ENCODE measurements at regions of chr2 and their contacts with region 1.

Region 1: DNA sequence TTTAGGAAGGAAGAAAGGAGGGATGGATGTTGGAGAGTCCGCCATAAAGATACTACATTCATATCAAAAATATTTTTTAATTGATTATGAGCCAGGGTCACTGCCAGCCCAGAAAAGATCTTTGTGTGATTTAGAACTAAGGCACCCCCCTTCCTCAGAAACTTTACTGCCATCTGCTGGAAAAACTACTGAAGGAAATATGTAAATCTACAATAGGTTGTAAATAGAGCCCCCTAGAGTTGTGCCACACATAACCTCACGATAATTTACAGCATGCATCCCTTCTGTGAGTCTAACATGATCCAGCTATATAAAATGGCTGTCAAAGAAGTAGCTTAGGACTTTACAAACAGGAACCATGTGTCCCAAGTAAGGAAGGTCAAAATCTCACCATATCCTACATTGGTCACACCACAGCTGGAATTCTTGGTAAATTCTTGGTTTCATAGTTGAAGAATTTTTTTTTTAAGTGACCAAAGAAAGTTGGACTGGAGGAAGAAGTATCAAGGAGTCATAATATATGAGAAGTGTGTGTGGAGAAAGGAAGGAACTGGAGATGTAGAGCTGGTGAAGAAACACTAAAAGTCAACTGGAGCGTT is 152.5 kb downstream of the CYP26B1 start:
- DNase-seq: no peak
- H3K4me3 ChIP-seq: no peak overlapping the region
- H3K27me3 ChIP-seq: peaks cover 5% of the 10 kb centered on the region
- CTCF ChIP-seq: peak; percentile 60

Region 2: DNA sequence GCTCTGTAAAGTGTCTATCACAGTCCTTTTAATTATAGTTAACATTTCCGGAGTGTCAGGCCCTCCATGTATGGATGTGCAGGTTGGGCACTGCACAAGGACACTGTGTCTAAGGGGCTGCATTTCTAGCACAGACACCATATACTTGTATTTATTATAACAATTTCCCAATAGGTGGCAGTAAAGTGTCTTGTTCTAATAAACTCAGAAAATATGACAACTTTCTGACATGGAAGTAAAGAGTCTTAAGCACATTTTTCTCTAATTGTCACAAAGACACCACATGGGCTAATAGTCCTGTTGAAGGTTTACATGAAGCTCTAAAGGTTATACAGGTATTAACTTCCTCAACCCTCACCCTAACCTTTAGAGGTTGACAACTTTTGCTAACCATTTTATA is 385.2 kb before region 1 on chr2:
- CTCF ChIA-PET with region 1: interaction called, 12 read pairs
- POLR2A ChIA-PET with region 1: no interaction called
- DNase-seq: no peak
- H3K4me3 ChIP-seq: no peak overlapping the region
- H3K27me3 ChIP-seq: peaks cover 18% of the 10 kb centered on the region
- CTCF ChIP-seq: no peak

Region 3: GRCh38 chr2:71807975-71808451 is 187.2 kb before region 1 on chr2:
- CTCF ChIA-PET with region 1: interaction called, 100 read pairs
- POLR2A ChIA-PET with region 1: no interaction called
- DNase-seq: no peak
- H3K4me3 ChIP-seq: no peak overlapping the region
- H3K27me3 ChIP-seq: peaks cover 2% of the 10 kb centered on the region; the same call in 1 of the 2 replicates
- CTCF ChIP-seq: no peak

Region 4: DNA sequence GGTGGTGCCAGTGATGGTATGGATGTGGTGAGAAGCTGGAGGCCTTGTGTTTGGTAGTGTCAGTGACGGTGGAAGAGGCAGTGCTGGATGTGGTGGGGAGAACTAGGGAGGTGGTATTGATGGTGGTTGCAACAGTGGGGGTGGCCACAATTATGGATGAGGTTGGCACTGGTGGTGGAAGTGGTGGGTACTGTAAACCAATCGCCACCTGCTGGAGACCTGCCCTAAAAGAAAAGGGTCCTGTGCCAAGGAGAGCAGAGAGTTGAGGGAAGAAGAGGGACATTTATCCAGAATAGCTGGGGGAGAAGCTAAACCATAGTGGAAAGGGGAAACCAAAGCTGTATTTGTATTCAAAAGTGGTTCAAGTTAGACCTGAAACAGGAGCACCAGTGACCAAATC is 121.6 kb before region 1 on chr2:
- CTCF ChIA-PET with region 1: interaction called, 12 read pairs
- POLR2A ChIA-PET with region 1: no interaction called
- DNase-seq: no peak
- H3K4me3 ChIP-seq: no peak overlapping the region
- H3K27me3 ChIP-seq: peaks cover 4% of the 10 kb centered on the region
- CTCF ChIP-seq: no peak

Region 5: DNA sequence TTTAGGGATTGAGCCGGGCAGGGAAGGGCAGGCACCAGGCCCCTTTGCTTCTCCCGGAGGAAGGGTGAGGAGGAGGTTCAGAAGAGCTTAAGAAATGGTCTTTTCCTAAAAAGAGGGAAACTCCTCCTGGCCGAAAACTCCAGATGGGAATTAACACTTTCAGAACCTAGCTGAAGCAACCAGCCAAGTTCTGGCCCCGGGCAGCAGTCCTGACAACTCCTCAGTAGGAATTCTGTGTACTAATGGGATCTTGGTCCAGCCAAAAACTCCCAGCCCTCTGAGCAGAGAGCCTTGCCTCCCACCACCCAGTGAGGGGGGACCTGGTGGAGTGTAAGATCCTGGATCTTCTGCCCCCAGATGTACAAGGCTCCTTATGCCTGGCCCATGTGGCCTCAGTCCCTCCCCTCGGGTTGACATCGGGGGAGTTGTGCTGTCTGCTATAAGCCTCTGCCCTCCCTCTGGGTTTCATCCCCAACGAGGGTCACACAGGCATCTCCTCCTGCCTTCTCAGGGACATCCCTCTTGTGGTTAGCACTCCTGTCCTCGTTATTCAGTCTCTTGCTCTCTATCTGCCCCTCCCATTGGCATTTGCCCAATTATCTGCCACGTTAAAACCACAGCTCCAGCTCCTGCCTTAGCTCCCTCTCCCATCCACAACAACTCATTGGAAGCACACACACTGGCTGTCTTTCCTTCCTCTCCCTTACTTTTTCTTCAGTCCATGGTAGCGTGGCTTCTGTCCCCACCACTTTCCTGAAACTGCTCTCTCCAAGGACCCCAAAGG is 32.1 kb before region 1 on chr2:
- CTCF ChIA-PET with region 1: interaction called, 10 read pairs
- POLR2A ChIA-PET with region 1: no interaction called
- DNase-seq: no peak
- H3K4me3 ChIP-seq: no peak overlapping the region
- H3K27me3 ChIP-seq: peaks cover 6% of the 10 kb centered on the region
- CTCF ChIP-seq: no peak

Region 6: GRCh38 chr2:72012886-72013574 is 17.9 kb after region 1 on chr2:
- CTCF ChIA-PET with region 1: interaction called, 11 read pairs
- POLR2A ChIA-PET with region 1: no interaction called
- DNase-seq: no peak
- H3K4me3 ChIP-seq: no peak overlapping the region
- H3K27me3 ChIP-seq: peaks cover 1% of the 10 kb centered on the region; the same call in 1 of the 2 replicates
- CTCF ChIP-seq: no peak